ENCODE measurements at regions of chr16 and their contacts with region 1.

Region 1: DNA sequence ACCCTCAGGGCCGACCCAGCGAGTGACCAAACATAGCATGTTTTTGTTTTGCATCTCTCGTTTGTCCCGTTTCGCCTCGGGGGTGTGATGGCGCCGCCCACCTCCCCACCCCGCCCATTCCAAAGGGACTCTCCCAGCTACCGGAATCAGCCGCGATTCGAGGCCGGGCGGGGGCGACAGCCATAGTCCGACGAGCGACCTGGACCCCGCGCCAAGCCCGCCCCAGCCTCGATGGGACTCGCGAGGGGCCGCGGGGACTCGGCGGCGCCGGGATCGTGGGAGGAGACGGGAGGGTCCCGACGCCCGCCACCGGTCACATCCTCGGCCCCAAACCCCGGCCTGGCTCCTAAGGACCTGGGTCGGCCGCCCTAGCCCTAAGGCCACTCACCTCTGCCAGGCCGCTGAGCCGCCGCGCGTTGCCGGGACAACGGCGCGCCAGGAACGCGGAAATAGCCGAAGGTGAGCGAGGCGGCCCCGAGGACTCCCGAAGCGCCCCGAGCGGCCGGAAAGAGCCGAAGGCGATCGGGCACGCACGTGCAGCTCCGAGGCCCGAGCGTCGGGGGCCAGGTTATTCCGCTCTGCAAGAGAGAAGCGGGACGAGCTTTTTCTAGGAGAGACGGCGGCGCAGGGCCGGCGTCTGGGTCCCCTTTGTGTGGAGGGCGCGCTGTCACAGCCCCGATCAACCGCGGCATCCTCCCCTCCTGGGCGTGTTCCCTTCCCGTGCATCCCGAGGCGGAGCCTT is 1.4 kb downstream of the IFT140 start:
- DNase-seq: peak; percentile 85 to 94 (median 92)
- ATAC-seq: peak; percentile 56
- H3K4me3 ChIP-seq: peak overlapping the region; percentile 48 to 83
- H3K4me3 Mint-ChIP-seq: peak overlapping the region; percentile 83
- H3K27ac ChIP-seq: peak overlapping the region; percentile 48 to 64
- H3K27ac Mint-ChIP-seq: peak overlapping the region; percentile 49
- H3K4me1 ChIP-seq: peaks cover 34% of the 10 kb centered on the region
- H3K4me1 Mint-ChIP-seq: peaks cover 25% of the 10 kb centered on the region
- H3K27me3 ChIP-seq: peaks cover 2 to 4% of the 10 kb centered on the region in 2 experiments
- H3K27me3 Mint-ChIP-seq: peaks cover 6% of the 10 kb centered on the region
- CTCF ChIP-seq: no peak

Region 2: GRCh38 chr16:1308977-1309885 is 301.2 kb before region 1 on chr16 and contains the start of gene UBE2I:
- CTCF ChIA-PET with region 1: no interaction called
- POLR2A ChIA-PET with region 1: no interaction called
- intact Hi-C with region 1: loop called in 1 of 2 experiments (anchors 2 kb)
- DNase-seq: peak; percentile 96 to 99 (median 98)
- ATAC-seq: peak; percentile 73
- H3K4me3 ChIP-seq: peak within 1 kb of the TSS; percentile 82 to 95
- H3K4me3 Mint-ChIP-seq: peak within 1 kb of the TSS; percentile 92
- H3K27ac ChIP-seq: peak within 1 kb of the TSS; percentile 100
- H3K27ac Mint-ChIP-seq: peak within 1 kb of the TSS; percentile 100
- H3K4me1 ChIP-seq: peaks cover 50% of the 10 kb centered on the region
- H3K4me1 Mint-ChIP-seq: peaks cover 41% of the 10 kb centered on the region
- H3K27me3 ChIP-seq: no peaks in the 10 kb centered on the region
- H3K27me3 Mint-ChIP-seq: no peaks in the 10 kb centered on the region
- CTCF ChIP-seq: no peak
- total RNA-seq, gene UBE2I: 285 to 294 TPM

Region 3: GRCh38 chr16:1420111-1420540 is 190.3 kb before region 1 on chr16:
- CTCF ChIA-PET with region 1: no interaction called
- POLR2A ChIA-PET with region 1: interaction called, 4 read pairs
- intact Hi-C with region 1: loop called (anchors 1 to 2 kb)
- DNase-seq: peak in 1 of 9 experiments; percentile 16
- ATAC-seq: no peak
- H3K4me3 ChIP-seq: peak overlapping the region; percentile 85 to 95
- H3K4me3 Mint-ChIP-seq: peak overlapping the region; percentile 92
- H3K27ac ChIP-seq: peak overlapping the region; percentile 81 to 98
- H3K27ac Mint-ChIP-seq: peak overlapping the region; percentile 76
- H3K4me1 ChIP-seq: peaks cover 19% of the 10 kb centered on the region
- H3K4me1 Mint-ChIP-seq: peaks cover 29% of the 10 kb centered on the region
- H3K27me3 ChIP-seq: no peaks in the 10 kb centered on the region
- H3K27me3 Mint-ChIP-seq: no peaks in the 10 kb centered on the region
- CTCF ChIP-seq: no peak

Region 4: DNA sequence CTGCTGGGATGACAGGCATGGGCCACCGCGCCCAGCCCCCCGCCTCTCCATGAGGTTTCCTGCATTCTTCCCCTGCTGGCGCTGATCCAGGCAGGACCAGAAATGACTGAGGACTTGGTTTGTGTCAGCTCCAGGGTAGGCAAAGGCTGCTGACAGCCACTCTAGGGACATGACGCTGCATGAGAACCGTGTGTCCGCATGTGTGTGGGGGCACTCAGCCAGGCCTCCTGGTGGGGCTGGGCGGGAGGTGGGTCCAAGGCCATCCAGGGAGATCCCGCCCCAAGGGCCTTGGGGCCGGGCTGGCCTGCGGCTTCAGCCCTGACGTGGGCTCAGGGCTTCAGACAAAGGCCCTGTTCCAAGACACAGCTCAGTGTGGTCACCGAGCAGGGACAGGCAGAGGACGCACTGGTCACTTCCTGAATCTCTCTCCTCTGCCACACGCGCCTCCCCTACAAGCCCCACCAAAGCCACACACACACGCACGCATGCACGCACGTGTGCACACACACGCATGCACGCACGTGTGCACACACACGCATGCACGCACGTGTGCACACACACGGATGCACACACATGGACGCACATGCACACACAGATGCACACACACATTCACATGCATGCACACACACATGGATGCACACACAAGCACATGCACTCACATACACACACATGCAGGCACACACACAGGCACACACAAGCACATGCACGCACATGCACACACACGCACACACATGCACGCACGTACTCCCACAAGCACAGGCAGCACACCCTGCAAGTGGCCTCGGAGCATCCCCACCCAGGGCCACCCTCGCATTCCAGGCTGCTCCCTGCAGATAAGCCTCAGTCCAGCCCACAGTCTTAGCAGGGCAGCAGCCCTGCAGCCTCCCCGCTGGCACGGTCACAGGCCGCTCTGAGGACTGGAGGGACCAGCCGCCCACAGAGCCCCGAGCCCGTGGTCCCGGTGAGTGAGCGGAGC is 82.3 kb before region 1 on chr16:
- CTCF ChIA-PET with region 1: no interaction called
- POLR2A ChIA-PET with region 1: interaction called, 3 read pairs
- intact Hi-C with region 1: loop called in 1 of 2 experiments (anchors 1 kb)
- DNase-seq: no peak
- ATAC-seq: no peak
- H3K4me3 ChIP-seq: no peak overlapping the region
- H3K4me3 Mint-ChIP-seq: peak overlapping the region; percentile 85
- H3K27ac ChIP-seq: no peak overlapping the region
- H3K27ac Mint-ChIP-seq: peak overlapping the region; percentile 37
- H3K4me1 ChIP-seq: peaks cover 44% of the 10 kb centered on the region
- H3K4me1 Mint-ChIP-seq: peaks cover 38% of the 10 kb centered on the region
- H3K27me3 ChIP-seq: no peaks in the 10 kb centered on the region
- H3K27me3 Mint-ChIP-seq: no peaks in the 10 kb centered on the region
- CTCF ChIP-seq: no peak

Region 5: DNA sequence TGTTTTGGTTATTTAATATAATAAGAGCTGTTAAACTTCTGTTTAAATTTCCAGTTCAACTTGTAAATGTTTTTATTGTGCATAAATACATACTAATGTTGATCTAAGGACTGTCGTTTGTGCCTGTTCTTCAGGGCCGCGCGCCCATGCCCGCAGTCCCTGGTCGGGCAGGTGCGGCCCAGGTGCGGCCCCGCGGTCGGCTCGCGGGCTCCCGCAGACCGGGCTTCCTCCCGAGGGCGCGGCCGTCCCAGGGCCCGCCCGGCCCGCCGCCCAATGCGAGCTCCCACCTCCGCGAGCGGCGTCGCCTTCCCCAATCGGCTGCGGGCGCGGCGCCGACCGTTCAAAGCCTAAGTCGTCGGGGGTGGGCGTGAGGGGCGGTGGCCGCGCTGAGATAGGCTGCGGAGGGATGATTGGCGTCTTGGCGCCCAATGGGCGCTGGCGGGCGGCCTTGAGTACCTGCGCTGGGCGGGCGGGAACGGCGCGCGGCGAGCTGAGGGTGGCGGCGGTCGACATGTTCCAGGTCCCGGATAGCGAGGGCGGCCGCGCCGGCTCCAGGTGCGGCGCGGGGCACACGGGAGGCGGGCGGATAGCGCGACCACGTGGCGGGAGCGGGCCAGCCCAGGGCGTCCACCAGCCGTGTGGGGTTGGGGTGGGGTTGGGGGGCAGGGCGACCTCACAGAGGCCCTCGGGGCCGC is 67.5 kb after region 1 on chr16 and contains the start of gene JPT2:
- CTCF ChIA-PET with region 1: no interaction called
- POLR2A ChIA-PET with region 1: no interaction called
- intact Hi-C with region 1: loop called (anchors 1 kb)
- DNase-seq: peak; percentile 87 to 98 (median 95)
- ATAC-seq: peak; percentile 97
- H3K4me3 ChIP-seq: peak within 1 kb of the TSS; percentile 54 to 57
- H3K4me3 Mint-ChIP-seq: peak within 1 kb of the TSS; percentile 88
- H3K27ac ChIP-seq: peak within 1 kb of the TSS; percentile 31 to 37
- H3K27ac Mint-ChIP-seq: peak within 1 kb of the TSS; percentile 62
- H3K4me1 ChIP-seq: peaks cover 15% of the 10 kb centered on the region
- H3K4me1 Mint-ChIP-seq: peaks cover 27% of the 10 kb centered on the region
- H3K27me3 ChIP-seq: no peaks in the 10 kb centered on the region
- H3K27me3 Mint-ChIP-seq: no peaks in the 10 kb centered on the region
- CTCF ChIP-seq: no peak
- total RNA-seq, gene JPT2: 1.4 to 2.8 TPM

Region 6: DNA sequence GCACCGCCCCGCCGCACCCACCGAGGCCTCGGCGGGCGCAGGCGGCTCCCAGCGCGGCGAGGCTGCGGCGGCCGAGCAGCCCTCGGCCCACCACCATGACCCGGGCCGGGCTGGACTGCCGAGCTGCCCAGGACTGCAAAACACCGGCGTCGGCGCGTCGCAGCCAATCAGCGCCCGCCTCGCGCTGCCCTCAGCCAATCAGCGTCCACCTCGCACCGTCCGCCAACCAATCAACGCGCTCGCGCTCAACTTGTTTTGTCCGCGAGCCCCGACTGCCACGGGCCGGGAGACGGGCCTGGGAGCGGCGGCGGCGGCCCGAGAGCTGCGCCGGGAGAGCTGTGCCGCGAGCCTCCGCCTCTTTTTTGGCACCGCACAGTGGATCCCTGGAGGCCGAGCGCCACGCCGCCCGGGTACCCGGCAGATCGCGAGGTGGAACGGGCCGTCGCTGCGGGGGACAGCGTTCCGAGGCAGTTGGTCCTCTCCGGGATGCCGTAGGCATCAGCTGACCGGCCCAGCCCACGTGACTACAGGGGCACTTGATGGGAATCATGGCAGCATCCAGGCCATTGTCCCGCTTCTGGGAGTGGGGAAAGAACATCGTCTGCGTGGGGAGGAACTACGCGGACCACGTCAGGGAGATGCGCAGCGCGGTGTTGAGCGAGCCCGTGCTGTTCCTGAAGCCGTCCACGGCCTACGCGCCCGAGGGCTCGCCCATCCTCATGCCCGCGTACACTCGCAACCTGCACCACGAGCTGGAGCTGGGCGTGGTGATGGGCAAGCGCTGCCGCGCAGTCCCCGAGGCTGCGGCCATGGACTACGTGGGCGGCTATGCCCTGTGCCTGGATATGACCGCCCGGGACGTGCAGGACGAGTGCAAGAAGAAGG is 216.5 kb after region 1 on chr16 and contains the starts of genes FAHD1 and HAGH:
- CTCF ChIA-PET with region 1: no interaction called
- POLR2A ChIA-PET with region 1: no interaction called
- intact Hi-C with region 1: loop called in 1 of 2 experiments (anchors 5 kb)
- DNase-seq: peak; percentile 83 to 96 (median 89)
- ATAC-seq: peak; percentile 79
- H3K4me3 ChIP-seq: peak within 1 kb of the TSS; percentile 72 to 91
- H3K4me3 Mint-ChIP-seq: peak within 1 kb of the TSS; percentile 90
- H3K27ac ChIP-seq: peak within 1 kb of the TSS; percentile 73 to 78
- H3K27ac Mint-ChIP-seq: peak within 1 kb of the TSS; percentile 95
- H3K4me1 ChIP-seq: peaks cover 46% of the 10 kb centered on the region
- H3K4me1 Mint-ChIP-seq: peaks cover 48% of the 10 kb centered on the region
- H3K27me3 ChIP-seq: no peaks in the 10 kb centered on the region
- H3K27me3 Mint-ChIP-seq: no peaks in the 10 kb centered on the region
- CTCF ChIP-seq: no peak
- total RNA-seq, gene FAHD1: 11.7 to 13.7 TPM
- total RNA-seq, gene HAGH: 32.5 to 41.1 TPM

Measured in CD8-positive, alpha-beta T cell (primary cell).